ENCODE measurements at regions of chr15 and their contacts with region 1.

Region 1: DNA sequence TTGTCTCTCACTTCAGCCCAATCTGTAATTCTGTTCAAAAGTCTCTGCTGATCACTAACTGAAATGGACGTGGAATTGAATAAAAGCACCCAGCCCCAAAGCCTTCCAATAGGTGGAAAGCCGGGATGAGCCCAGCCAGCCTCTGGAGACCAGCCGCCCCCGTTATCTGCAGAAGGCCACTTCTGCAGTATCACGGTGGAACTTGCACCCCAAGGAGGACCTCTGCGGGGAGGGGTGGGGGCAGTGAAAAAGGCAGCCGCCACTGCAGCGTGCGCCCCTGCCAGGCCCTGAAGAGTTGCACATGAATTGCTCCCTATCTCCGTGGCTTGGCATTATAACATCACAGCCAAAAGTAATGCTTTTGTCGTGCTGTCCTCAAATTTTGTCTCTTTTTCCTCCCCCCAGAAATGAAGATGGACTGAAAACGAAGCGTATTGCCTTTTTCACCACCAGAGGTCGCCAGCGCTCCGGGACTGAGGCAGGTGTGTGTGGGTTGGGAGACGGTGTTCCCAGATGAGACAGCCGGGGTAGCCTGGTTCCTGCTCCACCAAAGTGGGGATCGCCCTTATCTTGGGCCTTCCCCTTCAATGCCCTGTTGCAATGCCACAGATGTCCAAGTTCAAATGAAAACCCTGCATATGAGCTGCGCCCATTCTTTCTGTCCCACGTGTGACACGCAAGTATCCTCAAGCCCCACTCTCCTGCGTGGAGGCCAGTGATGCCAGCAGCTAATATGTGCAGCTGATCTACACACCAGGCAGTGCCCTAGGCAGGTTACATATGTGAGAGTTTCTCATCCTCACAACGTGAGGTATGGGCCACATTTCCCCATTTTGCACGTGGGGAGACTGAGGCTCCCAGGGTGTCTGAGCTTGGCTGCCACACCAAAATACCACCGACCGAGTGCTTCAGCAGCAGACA is 96.0 kb downstream of the LRRK1 start:
- DNase-seq: peak; percentile 72 to 87 (median 77)
- H3K4me3 ChIP-seq: no peak overlapping the region
- H3K27ac ChIP-seq: no peak overlapping the region
- H3K4me1 ChIP-seq: peaks cover 0 to 16% of the 10 kb centered on the region in 2 donors
- H3K27me3 ChIP-seq: peaks cover 5% of the 10 kb centered on the region
- CTCF ChIP-seq: peak; percentile 83 to 92 (median 88)
- POLR2A ChIP-seq: no peak

Region 2: DNA sequence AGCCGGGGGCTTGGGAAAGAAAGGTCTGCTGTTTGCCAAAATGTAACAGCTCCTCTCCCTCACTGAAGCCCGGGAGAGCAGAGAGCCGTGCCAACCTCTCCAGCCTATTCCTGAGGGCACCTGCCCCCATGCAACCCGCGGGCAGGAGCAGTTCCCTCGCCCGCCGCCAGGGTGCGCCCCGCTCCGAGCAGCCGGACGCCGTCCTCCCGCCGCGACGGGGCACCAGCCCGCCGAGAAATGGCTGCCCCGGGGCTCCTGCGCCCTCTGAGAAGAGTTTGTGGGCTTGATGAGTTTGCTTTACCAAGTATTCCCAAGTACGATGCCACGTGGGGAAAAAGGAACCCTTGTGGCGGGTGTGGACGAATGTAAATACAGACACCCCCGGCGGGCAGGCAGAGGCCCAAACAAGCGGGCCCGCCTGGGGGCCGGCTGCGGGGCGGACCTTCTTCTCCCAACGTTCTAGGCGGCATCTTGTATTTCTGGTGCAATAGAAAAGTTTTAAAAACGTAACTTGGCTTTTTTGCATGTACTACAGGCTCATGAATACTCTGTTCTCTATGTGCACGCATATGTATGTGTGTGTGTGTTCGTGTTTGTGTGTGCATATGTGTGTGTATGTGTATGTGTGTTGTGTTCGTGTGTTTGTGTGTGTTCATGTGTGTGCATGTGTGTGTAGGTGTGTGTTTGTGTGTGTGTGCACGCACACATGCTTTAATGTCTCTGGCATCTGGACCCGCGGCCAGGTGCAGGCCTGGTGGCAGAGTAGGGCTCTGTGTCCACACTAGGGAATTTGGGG is 73.8 kb after region 1 on chr15:
- intact Hi-C with region 1: loop called (anchors 5 kb)
- DNase-seq: peak; percentile 58 to 83 (median 78)
- H3K4me3 ChIP-seq: peak overlapping the region in 1 of 4 donors; percentile 23
- H3K27ac ChIP-seq: peak overlapping the region in 2 of 5 donors; percentile 83 to 90
- H3K4me1 ChIP-seq: peaks cover 8 to 35% of the 10 kb centered on the region in 2 donors
- H3K27me3 ChIP-seq: no peaks in the 10 kb centered on the region
- CTCF ChIP-seq: peak; percentile 88 to 99 (median 98)
- POLR2A ChIP-seq: no peak

Region 3: GRCh38 chr15:101258238-101259144 is 243.3 kb after region 1 on chr15:
- intact Hi-C with region 1: loop called (anchors 2 to 5 kb)
- DNase-seq: peak; percentile 57 to 88 (median 74)
- H3K4me3 ChIP-seq: no peak overlapping the region
- H3K27ac ChIP-seq: no peak overlapping the region
- H3K4me1 ChIP-seq: peaks cover 0 to 10% of the 10 kb centered on the region in 2 donors
- H3K27me3 ChIP-seq: no peaks in the 10 kb centered on the region
- CTCF ChIP-seq: peak; percentile 63 to 96 (median 91)
- POLR2A ChIP-seq: no peak

Region 4: DNA sequence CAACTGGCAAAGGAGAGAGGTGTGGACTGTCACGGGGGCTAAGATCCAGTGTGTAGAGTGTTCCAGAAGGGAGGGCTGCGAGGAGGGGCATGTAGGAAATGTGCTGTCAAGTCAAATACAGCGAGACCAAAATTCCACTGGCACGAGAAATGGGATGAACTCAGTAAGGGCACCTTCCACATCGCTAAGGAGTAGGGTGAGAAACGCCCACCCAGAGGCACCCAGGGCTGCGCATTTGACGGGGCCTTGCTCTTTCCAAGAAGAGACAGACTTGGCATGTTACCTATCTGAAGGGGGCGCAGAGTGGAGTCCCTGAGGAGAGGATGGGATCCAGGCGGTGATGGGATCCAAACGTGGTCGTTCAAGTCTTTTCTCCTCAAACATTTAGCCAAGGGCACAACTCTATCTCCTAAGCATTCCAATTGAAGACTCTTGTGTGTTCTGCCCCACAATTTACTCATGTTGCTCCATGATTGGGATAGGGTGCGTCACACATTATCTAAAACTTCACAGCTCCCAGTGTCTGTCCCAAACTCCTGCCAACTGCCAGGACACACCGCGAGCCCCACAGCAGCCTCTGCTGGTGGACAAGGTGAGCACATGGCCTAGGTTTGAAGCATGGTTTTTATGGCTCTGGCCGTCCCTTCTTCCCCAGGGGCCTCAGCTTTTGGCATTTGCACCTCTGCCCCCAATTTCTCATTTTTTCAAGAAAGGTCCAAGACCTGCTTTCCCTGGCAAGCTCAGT is 254.5 kb after region 1 on chr15:
- intact Hi-C with region 1: loop called in 1 of 2 experiments (anchors 5 kb)
- DNase-seq: peak in 1 of 7 donors; percentile 46
- H3K4me3 ChIP-seq: no peak overlapping the region
- H3K27ac ChIP-seq: no peak overlapping the region
- H3K4me1 ChIP-seq: no peaks in the 10 kb centered on the region
- H3K27me3 ChIP-seq: no peaks in the 10 kb centered on the region
- CTCF ChIP-seq: peak in 3 of 6 experiments; percentile 10 to 20 (median 18)
- POLR2A ChIP-seq: no peak

Measured in adrenal gland (tissue), 19 donors.